PC-9 (cell line): ENCODE measurements at regions of chr1 and their contacts with region 1.

Region 1: DNA sequence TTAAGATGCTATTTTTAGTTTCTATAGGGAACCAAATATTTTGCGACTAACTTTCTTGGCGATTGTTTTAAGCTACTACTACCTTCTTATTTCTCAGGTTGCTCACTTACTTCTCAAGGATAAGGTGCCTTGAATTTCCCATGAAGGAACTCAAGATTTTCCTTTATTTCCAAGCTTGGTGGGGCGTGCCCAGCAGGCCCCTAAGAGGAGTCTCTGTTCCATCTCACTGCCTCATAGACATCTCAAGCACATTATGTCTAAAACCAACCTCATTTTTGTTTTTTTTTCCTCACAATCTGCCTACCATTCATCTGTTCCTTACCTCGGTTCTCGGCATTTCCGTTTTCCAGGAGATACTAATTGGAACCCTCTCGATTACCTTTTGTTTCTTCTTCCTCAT is 421.9 kb downstream of the DISC1 start:
- DNase-seq: no peak
- H3K4me3 ChIP-seq: no peak overlapping the region
- H3K27ac ChIP-seq: no peak overlapping the region
- H3K4me1 ChIP-seq: no peaks in the 10 kb centered on the region
- H3K27me3 ChIP-seq: no peaks in the 10 kb centered on the region
- CTCF ChIP-seq: no peak

Region 2: GRCh38 chr1:231931846-231932454 is 116.5 kb before region 1 on chr1:
- CTCF ChIA-PET with region 1: no interaction called
- POLR2A ChIA-PET with region 1: interaction called, 10 read pairs
- intact Hi-C with region 1: no loop called
- DNase-seq: no peak
- H3K4me3 ChIP-seq: no peak overlapping the region
- H3K27ac ChIP-seq: no peak overlapping the region
- H3K4me1 ChIP-seq: no peaks in the 10 kb centered on the region
- H3K27me3 ChIP-seq: no peaks in the 10 kb centered on the region
- CTCF ChIP-seq: peak; percentile 82

Region 3: DNA sequence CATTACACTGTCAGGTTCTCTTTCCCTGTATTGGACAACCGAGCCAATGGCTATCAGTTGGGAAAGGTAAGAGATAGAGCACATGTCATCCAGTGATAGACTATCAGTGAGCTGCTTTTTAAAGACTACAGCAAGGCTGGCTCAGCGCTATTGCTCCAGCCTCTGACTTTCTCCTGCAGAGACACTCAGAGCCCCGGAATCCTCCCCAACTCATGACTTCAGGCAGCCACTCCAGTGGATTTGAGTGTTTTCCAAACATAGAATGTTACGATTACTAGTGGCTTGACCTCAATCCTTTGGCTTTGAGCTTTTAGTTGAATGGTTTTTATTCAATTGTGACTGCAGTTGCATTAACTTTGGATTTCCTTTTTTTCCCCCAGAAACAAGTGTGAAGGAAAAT is 90.0 kb before region 1 on chr1:
- CTCF ChIA-PET with region 1: no interaction called
- POLR2A ChIA-PET with region 1: no interaction called
- intact Hi-C with region 1: no loop called
- DNase-seq: no peak
- H3K4me3 ChIP-seq: no peak overlapping the region
- H3K27ac ChIP-seq: no peak overlapping the region
- H3K4me1 ChIP-seq: no peaks in the 10 kb centered on the region
- H3K27me3 ChIP-seq: no peaks in the 10 kb centered on the region
- CTCF ChIP-seq: no peak

Region 4: GRCh38 chr1:232016616-232017015 is 31.9 kb before region 1 on chr1:
- CTCF ChIA-PET with region 1: no interaction called
- POLR2A ChIA-PET with region 1: no interaction called
- intact Hi-C with region 1: no loop called
- DNase-seq: no peak
- H3K4me3 ChIP-seq: no peak overlapping the region
- H3K27ac ChIP-seq: no peak overlapping the region
- H3K4me1 ChIP-seq: no peaks in the 10 kb centered on the region
- H3K27me3 ChIP-seq: no peaks in the 10 kb centered on the region
- CTCF ChIP-seq: no peak